Activated CD4-positive, alpha-beta T cell treated with anti-CD3 and anti-CD28 coated beads for 36 hours (primary cell): ENCODE measurements at regions of chr2 and their contacts with region 1.

Region 1: GRCh38 chr2:189466660-189467059 is 25.4 kb downstream of the WDR75 start:
- DNase-seq: no peak
- ATAC-seq: no peak
- H3K4me3 Mint-ChIP-seq: no peak overlapping the region
- H3K27ac Mint-ChIP-seq: no peak overlapping the region
- H3K4me1 Mint-ChIP-seq: peaks cover 1% of the 10 kb centered on the region
- H3K27me3 Mint-ChIP-seq: no peaks in the 10 kb centered on the region

Region 2: GRCh38 chr2:189393440-189394111 is 73.1 kb before region 1 on chr2:
- CTCF ChIA-PET with region 1: no interaction called
- POLR2A ChIA-PET with region 1: no interaction called
- intact Hi-C with region 1: no loop called
- DNase-seq: no peak
- ATAC-seq: no peak
- H3K4me3 Mint-ChIP-seq: no peak overlapping the region
- H3K27ac Mint-ChIP-seq: no peak overlapping the region
- H3K4me1 Mint-ChIP-seq: no peaks in the 10 kb centered on the region
- H3K27me3 Mint-ChIP-seq: no peaks in the 10 kb centered on the region

Region 3: GRCh38 chr2:189454009-189454408 is 12.7 kb before region 1 on chr2:
- CTCF ChIA-PET with region 1: interaction called, 5 read pairs
- POLR2A ChIA-PET with region 1: no interaction called
- intact Hi-C with region 1: loop called in 1 of 2 experiments (anchors 1 kb)
- DNase-seq: no peak
- ATAC-seq: no peak
- H3K4me3 Mint-ChIP-seq: no peak overlapping the region
- H3K27ac Mint-ChIP-seq: peak overlapping the region; percentile 16
- H3K4me1 Mint-ChIP-seq: peaks cover 3% of the 10 kb centered on the region
- H3K27me3 Mint-ChIP-seq: no peaks in the 10 kb centered on the region

Region 4: GRCh38 chr2:189633392-189633811 is 166.7 kb after region 1 on chr2:
- CTCF ChIA-PET with region 1: no interaction called
- POLR2A ChIA-PET with region 1: no interaction called
- intact Hi-C with region 1: loop called (anchors 2 to 10 kb)
- DNase-seq: peak; percentile 17
- ATAC-seq: no peak
- H3K4me3 Mint-ChIP-seq: no peak overlapping the region
- H3K27ac Mint-ChIP-seq: no peak overlapping the region
- H3K4me1 Mint-ChIP-seq: no peaks in the 10 kb centered on the region
- H3K27me3 Mint-ChIP-seq: no peaks in the 10 kb centered on the region